Activated CD8-positive, alpha-beta T cell treated with anti-CD3 and anti-CD28 coated beads for 36 hours (primary cell): ENCODE measurements at regions of chr2 and their contacts with region 1.

Region 1: GRCh38 chr2:110780461-110780860 is 48.1 kb downstream of the ACOXL start:
- DNase-seq: no peak
- ATAC-seq: no peak
- H3K4me3 Mint-ChIP-seq: no peak overlapping the region
- H3K27ac Mint-ChIP-seq: no peak overlapping the region
- H3K4me1 Mint-ChIP-seq: no peaks in the 10 kb centered on the region
- H3K27me3 Mint-ChIP-seq: peaks cover 25% of the 10 kb centered on the region
- CTCF ChIP-seq: no peak

Region 2: DNA sequence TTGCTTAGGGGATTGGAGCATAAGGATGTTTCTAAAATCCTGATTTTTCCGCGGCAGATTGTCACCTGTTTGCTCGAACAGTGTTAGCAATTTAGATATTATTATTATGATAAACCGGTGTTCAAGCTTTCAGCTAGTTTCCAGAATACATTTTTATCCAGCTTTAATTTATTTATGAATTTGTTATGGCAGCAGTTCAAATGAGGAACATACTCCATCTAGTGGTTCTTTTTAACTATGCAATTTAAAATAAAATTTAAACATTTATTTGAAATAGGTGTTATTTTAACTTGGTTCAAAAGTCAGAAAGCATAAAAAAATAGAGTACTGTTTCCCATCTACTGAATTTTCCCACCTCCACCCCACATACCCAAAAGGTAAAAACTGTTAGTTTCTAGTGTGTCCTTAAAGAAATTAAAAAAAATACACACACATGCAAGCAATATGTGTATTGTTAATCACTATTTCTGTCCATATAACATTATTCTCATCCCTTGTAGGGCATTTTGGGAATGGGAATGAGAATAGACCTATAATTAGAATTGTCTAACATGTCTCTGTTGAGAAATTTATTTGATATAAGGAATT is 24.9 kb before region 1 on chr2:
- CTCF ChIA-PET with region 1: interaction called, 10 read pairs
- POLR2A ChIA-PET with region 1: no interaction called
- intact Hi-C with region 1: no loop called
- DNase-seq: no peak
- ATAC-seq: no peak
- H3K4me3 Mint-ChIP-seq: no peak overlapping the region
- H3K27ac Mint-ChIP-seq: no peak overlapping the region
- H3K4me1 Mint-ChIP-seq: no peaks in the 10 kb centered on the region
- H3K27me3 Mint-ChIP-seq: peaks cover 26% of the 10 kb centered on the region
- CTCF ChIP-seq: peak; percentile 72